ENCODE measurements at regions of chr3 and their contacts with region 1.

Region 1: GRCh38 chr3:14402304-14402811 is at the start of gene SLC6A6:
- DNase-seq: peak; percentile 92
- H3K4me3 Mint-ChIP-seq: peak within 1 kb of the TSS; percentile 97
- H3K27ac Mint-ChIP-seq: peak within 1 kb of the TSS; percentile 96
- H3K4me1 Mint-ChIP-seq: peaks cover 42% of the 10 kb centered on the region
- H3K27me3 Mint-ChIP-seq: peaks cover 3% of the 10 kb centered on the region
- total RNA-seq, gene SLC6A6: 45.4 and 51.2 TPM in 2 replicates

Region 2: GRCh38 chr3:13479581-13480339 is 922.6 kb before region 1 on chr3 and contains the start of gene HDAC11:
- intact Hi-C with region 1: loop called (anchors 2 kb)
- DNase-seq: peak; percentile 98
- H3K4me3 Mint-ChIP-seq: peak within 1 kb of the TSS; percentile 88
- H3K27ac Mint-ChIP-seq: peak within 1 kb of the TSS; percentile 84
- H3K4me1 Mint-ChIP-seq: peaks cover under 1% of the 10 kb centered on the region
- H3K27me3 Mint-ChIP-seq: peaks cover 7% of the 10 kb centered on the region
- total RNA-seq, gene HDAC11: 1.4 and 2.0 TPM in 2 replicates

Region 3: DNA sequence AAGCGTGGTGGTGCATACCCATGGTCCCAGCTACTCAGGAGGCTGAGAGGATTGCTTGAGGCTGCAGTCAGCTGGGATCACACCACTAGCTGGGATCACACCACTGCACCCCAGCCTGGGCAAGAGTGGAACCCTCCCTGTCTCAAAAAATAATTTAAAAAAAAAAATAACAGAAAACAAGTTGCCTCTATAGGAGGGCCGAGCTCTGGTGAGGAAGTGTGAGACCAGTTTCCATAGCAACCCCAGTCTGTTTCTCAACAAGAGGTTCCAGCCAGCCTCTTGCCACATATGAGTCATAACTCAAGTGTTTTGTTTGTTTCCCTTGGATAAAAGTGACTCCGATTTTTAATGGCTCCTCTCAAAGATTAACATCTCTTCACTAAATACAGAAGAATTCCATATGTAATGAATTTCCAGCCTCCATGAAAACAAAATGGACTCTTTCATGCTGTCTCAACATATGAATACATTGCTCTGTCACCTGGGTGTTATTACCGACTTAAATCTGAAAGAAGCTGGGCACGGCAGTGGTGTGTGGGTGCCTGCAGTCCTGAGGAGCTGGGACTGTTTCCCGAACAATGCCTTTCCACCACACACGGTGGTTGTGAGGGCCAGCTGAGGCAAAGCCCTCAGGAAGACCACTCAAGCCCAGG is 257.8 kb before region 1 on chr3:
- intact Hi-C with region 1: loop called (anchors 1 kb)
- DNase-seq: peak; percentile 75
- H3K4me3 Mint-ChIP-seq: peak overlapping the region; percentile 64
- H3K27ac Mint-ChIP-seq: peak overlapping the region; percentile 93
- H3K4me1 Mint-ChIP-seq: peaks cover 59% of the 10 kb centered on the region
- H3K27me3 Mint-ChIP-seq: no peaks in the 10 kb centered on the region

Region 4: GRCh38 chr3:14253022-14253706 is 149.2 kb before region 1 on chr3:
- intact Hi-C with region 1: no loop called
- DNase-seq: no peak
- H3K4me3 Mint-ChIP-seq: no peak overlapping the region
- H3K27ac Mint-ChIP-seq: no peak overlapping the region
- H3K4me1 Mint-ChIP-seq: no peaks in the 10 kb centered on the region
- H3K27me3 Mint-ChIP-seq: peaks cover 2% of the 10 kb centered on the region

Region 5: GRCh38 chr3:14329116-14329830 is 73.1 kb before region 1 on chr3:
- intact Hi-C with region 1: no loop called
- DNase-seq: no peak
- H3K4me3 Mint-ChIP-seq: no peak overlapping the region
- H3K27ac Mint-ChIP-seq: no peak overlapping the region
- H3K4me1 Mint-ChIP-seq: no peaks in the 10 kb centered on the region
- H3K27me3 Mint-ChIP-seq: no peaks in the 10 kb centered on the region

Region 6: DNA sequence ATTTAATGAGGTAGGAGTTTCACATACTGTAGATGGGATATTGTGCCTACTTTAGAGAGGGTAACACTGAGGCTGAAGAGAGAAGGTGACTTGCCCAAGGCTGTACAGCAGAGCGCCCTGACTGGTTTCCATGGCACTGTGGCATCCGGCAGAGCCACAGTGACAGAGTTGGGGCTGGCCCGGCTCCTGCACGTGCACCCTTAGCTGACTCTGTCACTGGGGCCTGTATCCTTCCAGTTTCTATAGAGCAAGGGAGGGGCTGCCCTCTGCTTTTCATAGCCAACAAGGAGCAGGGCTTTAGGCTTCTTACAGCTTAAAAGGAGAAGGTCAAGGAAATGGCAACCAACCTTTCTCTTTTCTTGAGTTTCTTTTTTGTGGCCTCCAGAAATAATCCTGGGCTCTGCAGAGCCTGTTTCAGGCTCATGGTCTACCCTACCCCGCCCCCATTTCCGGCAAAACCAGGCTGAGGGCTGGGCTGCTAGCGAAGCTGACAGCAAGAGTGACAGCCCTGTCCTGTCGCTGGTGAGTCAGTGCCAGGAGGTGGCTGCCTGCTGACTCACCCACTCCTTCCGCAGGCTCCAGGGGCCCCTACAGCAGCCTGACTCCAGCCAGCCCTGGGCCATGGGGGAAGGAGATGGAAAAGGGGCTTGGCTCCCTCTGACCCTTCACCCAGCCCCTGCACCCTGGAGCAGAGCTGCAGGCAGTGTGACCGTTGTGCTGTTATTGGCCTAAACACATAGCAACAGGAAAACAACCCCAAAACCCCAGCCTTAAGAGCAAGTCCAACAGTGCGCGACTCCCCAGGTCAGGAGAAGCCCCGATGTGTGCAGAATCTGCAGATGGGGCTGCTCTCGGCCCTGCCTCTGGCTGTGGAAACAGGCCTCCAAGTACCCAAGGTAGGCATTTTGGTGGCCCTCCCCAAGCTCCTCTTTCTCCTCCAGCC is 29.8 kb after region 1 on chr3:
- intact Hi-C with region 1: loop called (anchors 1 kb)
- DNase-seq: peak; percentile 92
- H3K4me3 Mint-ChIP-seq: peak overlapping the region; percentile 76
- H3K27ac Mint-ChIP-seq: peak overlapping the region; percentile 97
- H3K4me1 Mint-ChIP-seq: peaks cover 85% of the 10 kb centered on the region
- H3K27me3 Mint-ChIP-seq: no peaks in the 10 kb centered on the region

Region 7: GRCh38 chr3:14467814-14468620 is 65.7 kb after region 1 on chr3:
- intact Hi-C with region 1: loop called (anchors 1 kb)
- DNase-seq: peak; percentile 23
- H3K4me3 Mint-ChIP-seq: no peak overlapping the region
- H3K27ac Mint-ChIP-seq: peak overlapping the region; percentile 63
- H3K4me1 Mint-ChIP-seq: peaks cover under 1% of the 10 kb centered on the region
- H3K27me3 Mint-ChIP-seq: no peaks in the 10 kb centered on the region

Region 8: DNA sequence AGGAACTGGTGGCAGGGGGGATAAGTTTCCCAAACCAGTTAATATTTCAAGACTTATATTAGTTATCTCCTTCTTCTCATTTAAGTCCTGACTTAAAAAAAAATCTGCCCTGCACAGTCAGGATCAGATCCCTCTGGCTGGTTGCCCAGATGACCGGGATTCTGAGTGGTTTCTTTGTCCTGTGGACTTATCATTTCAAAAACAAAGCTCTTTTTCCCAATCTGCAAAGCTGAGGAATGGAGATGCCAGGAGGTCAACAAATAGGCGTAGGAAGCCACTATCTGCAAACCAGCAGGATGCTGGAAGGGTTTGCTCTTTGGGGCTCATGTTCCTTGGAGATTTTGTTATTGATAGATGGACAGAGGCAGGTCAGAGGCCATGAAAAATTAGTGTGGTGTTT is 278.4 kb after region 1 on chr3:
- intact Hi-C with region 1: no loop called
- DNase-seq: no peak
- H3K4me3 Mint-ChIP-seq: no peak overlapping the region
- H3K27ac Mint-ChIP-seq: no peak overlapping the region
- H3K4me1 Mint-ChIP-seq: no peaks in the 10 kb centered on the region
- H3K27me3 Mint-ChIP-seq: no peaks in the 10 kb centered on the region

Region 9: GRCh38 chr3:15098503-15099363 is 696.4 kb after region 1 on chr3 and contains the start of gene RBSN:
- intact Hi-C with region 1: loop called (anchors 1 kb)
- DNase-seq: peak; percentile 95
- H3K4me3 Mint-ChIP-seq: peak within 1 kb of the TSS; percentile 92
- H3K27ac Mint-ChIP-seq: peak within 1 kb of the TSS; percentile 98
- H3K4me1 Mint-ChIP-seq: peaks cover 22% of the 10 kb centered on the region
- H3K27me3 Mint-ChIP-seq: peaks cover 2% of the 10 kb centered on the region
- total RNA-seq, gene RBSN: 11.7 and 12.5 TPM in 2 replicates